ENCODE measurements at regions of chr7 and their contacts with region 1.

Region 1: GRCh38 chr7:127651556-127652332 is at the start of gene SND1:
- DNase-seq: peak; percentile 99
- H3K4me3 ChIP-seq: peak within 1 kb of the TSS; percentile 93
- H3K27ac ChIP-seq: peak within 1 kb of the TSS; percentile 33
- H3K4me1 ChIP-seq: peaks cover 37% of the 10 kb centered on the region
- CTCF ChIP-seq: no peak
- total RNA-seq, gene SND1: 111 and 112 TPM in 2 replicates

Region 2: DNA sequence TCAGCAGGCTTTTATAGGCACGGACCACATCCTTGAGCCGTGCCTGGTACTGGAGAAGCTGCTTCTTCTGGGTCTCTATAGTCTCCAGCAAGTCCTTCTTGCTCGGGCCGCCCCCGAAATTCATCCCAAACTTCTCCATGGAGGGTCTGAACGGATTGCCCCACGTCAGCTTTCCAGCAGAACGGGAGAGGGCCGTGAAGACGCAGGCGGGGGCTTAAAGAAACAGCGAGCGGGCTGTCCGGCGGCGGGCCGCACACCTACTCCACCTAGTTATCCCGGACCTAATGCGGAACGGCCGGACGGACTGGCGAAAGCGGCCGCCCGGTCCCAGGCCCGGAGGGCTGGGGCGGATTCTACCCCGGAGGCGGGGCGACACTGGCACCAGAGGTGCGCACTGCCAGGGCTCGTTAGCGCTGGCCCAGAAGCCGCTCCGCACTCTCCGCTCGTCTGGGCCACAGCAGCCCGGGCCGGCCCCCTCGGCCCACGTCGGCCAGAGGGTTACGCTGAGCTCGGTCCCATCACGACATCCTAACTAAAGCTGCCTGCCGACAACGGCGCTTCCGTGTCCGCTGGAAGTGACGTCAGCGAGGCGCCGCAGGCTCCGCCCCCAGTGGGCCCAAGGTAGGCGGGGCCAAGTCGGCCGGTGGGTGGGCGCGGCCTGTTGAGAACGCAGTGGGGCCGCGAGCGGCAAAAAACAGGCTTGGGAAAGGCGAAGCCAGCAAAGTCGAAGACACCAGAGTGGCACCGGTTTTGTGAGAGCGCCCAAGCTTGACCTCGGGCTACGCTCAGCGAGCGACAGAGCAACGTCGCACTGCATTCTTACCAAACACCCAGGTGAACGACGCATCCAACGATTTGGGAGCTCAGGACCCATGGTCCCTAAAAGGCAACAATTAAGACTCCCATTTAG is 66.4 kb before region 1 on chr7 and contains the start of gene GCC1:
- CTCF ChIA-PET with region 1: no interaction called
- POLR2A ChIA-PET with region 1: interaction called, 5 read pairs
- intact Hi-C with region 1: loop called (anchors 5 kb)
- DNase-seq: peak; percentile 91
- H3K4me3 ChIP-seq: peak within 1 kb of the TSS; percentile 84
- H3K27ac ChIP-seq: peak within 1 kb of the TSS; percentile 7
- H3K4me1 ChIP-seq: peaks cover 35% of the 10 kb centered on the region
- CTCF ChIP-seq: no peak
- total RNA-seq, gene GCC1: 13.3 and 15.1 TPM in 2 replicates

Region 3: GRCh38 chr7:127755521-127755920 is 103.8 kb after region 1 on chr7:
- CTCF ChIA-PET with region 1: no interaction called
- POLR2A ChIA-PET with region 1: no interaction called
- intact Hi-C with region 1: no loop called
- DNase-seq: no peak
- H3K4me3 ChIP-seq: no peak overlapping the region
- H3K27ac ChIP-seq: no peak overlapping the region
- H3K4me1 ChIP-seq: peaks cover 9% of the 10 kb centered on the region
- CTCF ChIP-seq: no peak

Region 4: DNA sequence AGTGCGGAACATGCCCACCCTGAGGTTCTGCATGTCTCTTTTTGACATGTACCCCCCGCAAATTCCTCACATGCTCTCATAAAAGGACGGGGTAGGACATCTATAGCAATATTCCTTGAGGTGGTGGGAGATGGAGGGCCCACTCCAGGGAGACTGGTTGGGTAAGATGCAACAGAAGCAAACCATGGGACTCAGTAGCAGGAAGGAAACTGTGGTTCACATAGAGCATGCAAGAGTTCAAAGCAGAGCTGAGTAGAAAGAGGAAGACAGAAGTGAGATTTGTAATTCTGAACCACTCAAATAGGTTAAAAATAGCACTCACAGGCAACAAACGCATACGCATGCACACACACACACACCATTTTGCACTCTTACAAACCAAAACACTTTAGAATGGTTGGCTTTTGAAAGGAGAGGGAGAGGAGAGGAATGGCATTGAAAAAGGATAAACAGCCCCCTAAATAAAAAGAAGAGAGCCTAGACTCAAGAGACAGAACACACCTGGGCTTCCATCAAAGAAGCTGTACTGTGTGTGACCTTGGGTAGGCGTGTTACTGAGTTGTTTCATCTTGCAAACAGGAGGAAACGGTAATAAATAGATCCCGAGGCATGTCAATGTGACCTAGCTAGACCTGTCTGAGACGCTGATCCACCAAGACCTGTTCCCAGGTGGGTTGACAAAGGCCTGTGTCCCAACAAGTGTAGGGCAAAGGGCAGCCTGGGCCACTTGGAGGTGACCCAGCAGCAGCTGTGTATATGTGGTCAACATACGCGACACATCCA is 457.1 kb after region 1 on chr7:
- CTCF ChIA-PET with region 1: no interaction called
- POLR2A ChIA-PET with region 1: no interaction called
- intact Hi-C with region 1: loop called (anchors 5 kb)
- DNase-seq: peak; percentile 93
- H3K4me3 ChIP-seq: peak overlapping the region; percentile 51
- H3K27ac ChIP-seq: peak overlapping the region; percentile 95
- H3K4me1 ChIP-seq: peaks cover 86% of the 10 kb centered on the region
- CTCF ChIP-seq: no peak